Colonic mucosa (tissue), 4 donors: ENCODE measurements at regions of chrX and their contacts with region 1.

Region 1: DNA sequence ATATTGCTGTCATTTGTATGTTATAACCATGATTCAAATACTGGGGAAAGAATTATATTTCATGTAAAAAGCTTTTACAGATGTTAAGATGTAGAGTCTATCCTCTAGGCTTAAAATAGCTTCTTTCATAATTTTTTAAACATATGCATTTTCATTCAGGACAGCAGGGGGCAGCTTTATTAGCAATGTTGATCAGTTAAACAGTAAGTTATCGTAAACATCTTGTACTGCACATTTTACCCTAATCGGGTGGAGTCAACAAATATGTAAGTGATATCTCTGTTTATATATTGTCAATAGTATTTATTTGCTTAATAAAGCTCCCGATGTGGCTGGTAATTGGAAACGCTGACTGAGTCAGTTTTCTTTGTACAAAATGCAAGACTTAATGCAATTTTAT is 142.5 kb upstream of the MED14 start:
- DNase-seq: no peak
- H3K4me3 ChIP-seq: no peak overlapping the region
- H3K27ac ChIP-seq: no peak overlapping the region
- H3K4me1 ChIP-seq: no peaks in the 10 kb centered on the region
- H3K27me3 ChIP-seq: no peaks in the 10 kb centered on the region
- CTCF ChIP-seq: peak; percentile 37

Region 2: GRCh38 chrX:40719218-40719617 is 158.7 kb before region 1 on chrX:
- intact Hi-C with region 1: no loop called
- DNase-seq: no peak
- H3K4me3 ChIP-seq: no peak overlapping the region
- H3K27ac ChIP-seq: no peak overlapping the region
- H3K4me1 ChIP-seq: no peaks in the 10 kb centered on the region
- H3K27me3 ChIP-seq: no peaks in the 10 kb centered on the region
- CTCF ChIP-seq: no peak

Region 3: DNA sequence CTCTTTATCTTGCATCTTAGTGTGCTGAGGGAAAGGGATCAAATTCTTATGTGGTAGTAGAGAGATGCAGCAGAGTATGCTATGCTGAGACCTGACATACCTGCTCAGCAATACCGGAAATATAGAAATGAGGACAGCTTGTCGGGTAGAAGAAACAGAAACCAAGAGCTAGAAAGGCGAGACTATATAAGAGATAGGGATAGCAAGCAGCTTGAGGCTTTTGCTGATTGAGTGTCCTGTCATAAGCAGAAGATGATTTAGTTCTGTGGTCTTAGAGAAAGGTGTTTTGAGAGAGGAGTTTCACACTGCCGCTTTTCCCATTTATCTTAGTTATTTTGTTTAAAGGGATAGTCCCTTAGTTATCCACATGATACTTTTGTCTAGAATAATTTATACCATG is 239.1 kb after region 1 on chrX:
- intact Hi-C with region 1: loop called (anchors 10 kb)
- DNase-seq: no peak
- H3K4me3 ChIP-seq: no peak overlapping the region
- H3K27ac ChIP-seq: no peak overlapping the region
- H3K4me1 ChIP-seq: no peaks in the 10 kb centered on the region
- H3K27me3 ChIP-seq: no peaks in the 10 kb centered on the region
- CTCF ChIP-seq: no peak